ENCODE measurements at regions of chr10 and their contacts with region 1.

Region 1: DNA sequence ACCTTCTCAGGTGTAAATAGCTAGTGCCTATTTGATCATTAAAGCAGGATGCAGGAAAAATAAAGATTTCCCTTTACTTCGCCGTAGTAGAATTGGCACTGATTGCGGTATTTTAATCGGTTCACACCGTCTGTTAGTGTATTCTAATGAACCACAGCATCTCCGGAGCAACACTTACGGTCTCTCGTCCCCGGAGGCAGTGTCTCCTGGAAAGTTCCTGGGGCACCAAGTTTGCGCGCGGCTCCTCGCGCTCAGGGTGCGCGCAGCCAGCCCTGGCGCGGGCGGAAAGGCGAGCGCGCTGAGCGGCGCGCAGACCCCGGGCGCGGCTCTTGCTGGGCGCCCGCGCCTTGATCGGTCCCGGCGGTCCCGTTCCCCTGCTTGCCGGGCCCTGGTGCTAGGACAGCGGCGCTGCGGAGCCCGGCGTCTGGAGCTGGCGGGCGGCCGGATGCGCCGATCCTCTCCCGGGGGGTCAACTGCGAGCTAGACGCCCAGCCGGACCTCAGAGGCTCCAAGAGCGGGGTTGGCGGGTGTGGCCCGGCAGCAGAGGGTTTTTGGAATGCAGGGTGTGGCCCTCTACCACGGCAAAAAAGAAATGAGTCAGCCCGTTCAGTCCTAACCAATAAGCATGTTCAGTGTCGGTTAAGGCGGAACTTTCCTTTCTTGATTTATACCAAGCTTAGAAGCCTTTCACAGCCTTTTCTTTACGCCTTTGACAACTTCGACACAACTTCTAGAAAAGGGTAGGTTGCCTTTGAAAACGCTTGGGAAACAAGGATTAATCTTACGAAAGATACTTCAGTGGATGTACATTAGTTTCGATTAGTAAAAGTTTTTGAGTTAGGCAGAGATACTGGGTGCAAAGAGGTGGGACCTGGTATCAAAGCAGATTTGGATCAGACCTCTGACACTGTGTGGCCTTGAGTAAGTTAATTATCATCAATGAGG is 166.8 kb upstream of the ASAH2 start:
- DNase-seq: peak; percentile 86
- H3K4me3 ChIP-seq: peak overlapping the region; percentile 58 to 81 (median 65)
- H3K27ac ChIP-seq: peak overlapping the region; percentile 37 to 87 (median 80)
- H3K4me1 ChIP-seq: peaks cover 0 to 81% (median 40%) of the 10 kb centered on the region in 6 donors
- H3K27me3 ChIP-seq: no peaks in the 10 kb centered on the region
- CTCF ChIP-seq: no peak
- POLR2A ChIP-seq: no peak

Region 2: DNA sequence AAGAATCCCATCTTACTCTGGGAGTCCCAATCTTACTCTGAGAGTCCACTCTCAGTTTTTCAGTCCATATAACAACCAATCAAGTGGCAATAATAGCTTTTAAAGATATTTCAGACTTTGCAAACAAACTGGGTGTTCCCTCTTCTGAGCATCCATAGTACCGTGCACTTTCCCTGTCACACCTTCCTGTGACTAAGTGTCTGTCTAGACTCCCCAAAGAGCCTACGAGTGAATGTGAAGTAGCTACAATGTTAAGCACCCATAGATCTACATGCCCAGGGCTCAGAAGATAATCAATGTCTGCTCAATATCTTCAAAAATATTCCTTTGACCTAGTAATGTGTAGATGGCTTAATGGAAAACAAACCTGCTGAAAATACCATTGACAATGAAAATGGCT is 71.2 kb before region 1 on chr10:
- intact Hi-C with region 1: no loop called
- DNase-seq: no peak
- H3K4me3 ChIP-seq: no peak overlapping the region
- H3K27ac ChIP-seq: no peak overlapping the region
- H3K4me1 ChIP-seq: peaks cover 0 to 19% (median 14%) of the 10 kb centered on the region in 6 donors
- H3K27me3 ChIP-seq: no peaks in the 10 kb centered on the region
- CTCF ChIP-seq: no peak
- POLR2A ChIP-seq: no peak

Region 3: GRCh38 chr10:50624866-50625692 is 206.9 kb after region 1 on chr10:
- intact Hi-C with region 1: loop called (anchors 5 kb)
- DNase-seq: no peak
- H3K4me3 ChIP-seq: peak overlapping the region; percentile 70 to 98 (median 94)
- H3K27ac ChIP-seq: peak overlapping the region; percentile 98 to 100 (median 99)
- H3K4me1 ChIP-seq: peaks cover 15 to 40% (median 30%) of the 10 kb centered on the region in 6 donors
- H3K27me3 ChIP-seq: no peaks in the 10 kb centered on the region
- CTCF ChIP-seq: peak; percentile 41 to 75 (median 57)
- POLR2A ChIP-seq: peak in 1 of 3 donors; percentile 44